AG04450 (cell line): ENCODE measurements at regions of chr1 and their contacts with region 1.

Region 1: DNA sequence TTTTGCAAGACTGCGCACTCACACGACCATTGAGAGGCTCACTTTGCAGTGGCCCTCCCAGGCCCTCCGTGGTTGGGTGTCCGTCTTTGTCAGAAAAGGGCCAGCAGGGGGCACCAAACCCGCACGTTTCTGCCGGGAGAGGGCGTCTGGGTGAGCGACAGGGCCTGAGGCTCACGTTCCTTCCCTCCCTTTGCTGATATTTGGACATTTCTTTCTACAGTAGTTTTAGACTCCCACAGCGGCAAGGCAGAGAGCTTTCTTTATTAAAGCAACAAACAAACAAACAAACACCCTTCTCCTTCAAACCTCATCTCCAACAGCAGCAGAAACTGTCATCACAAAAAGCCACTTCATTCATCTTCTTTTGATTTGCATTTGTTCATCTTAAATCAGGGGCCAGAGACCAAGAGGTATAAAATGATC is 79.2 kb upstream of the WDR26 start:
- DNase-seq: no peak
- H3K4me3 ChIP-seq: no peak overlapping the region
- H3K27ac ChIP-seq: no peak overlapping the region
- H3K27me3 ChIP-seq: no peaks in the 10 kb centered on the region
- CTCF ChIP-seq: peak; percentile 96

Region 2: GRCh38 chr1:224368409-224368808 is 145.4 kb before region 1 on chr1:
- CTCF ChIA-PET with region 1: no interaction called
- POLR2A ChIA-PET with region 1: no interaction called
- DNase-seq: no peak
- H3K4me3 ChIP-seq: no peak overlapping the region
- H3K27ac ChIP-seq: no peak overlapping the region
- H3K27me3 ChIP-seq: no peaks in the 10 kb centered on the region
- CTCF ChIP-seq: no peak

Region 3: DNA sequence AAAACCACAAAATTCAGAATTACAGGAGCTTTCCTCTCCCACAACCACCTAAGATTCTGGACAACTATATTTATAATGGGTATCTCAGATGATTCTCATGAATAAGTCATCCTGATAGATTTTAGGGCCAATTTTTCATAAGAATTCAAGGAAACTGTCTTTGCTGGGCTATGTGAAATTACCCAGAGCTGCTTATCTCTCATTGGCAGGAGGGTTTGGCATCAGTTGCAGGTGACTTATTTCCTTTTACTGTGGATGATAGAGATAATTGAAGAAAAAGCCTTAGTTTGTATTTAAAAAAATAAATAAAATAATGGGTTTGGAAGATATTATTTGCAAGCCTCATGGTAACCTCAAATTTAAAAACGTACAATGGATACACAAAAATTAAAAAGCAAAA is 41.0 kb before region 1 on chr1:
- CTCF ChIA-PET with region 1: no interaction called
- POLR2A ChIA-PET with region 1: no interaction called
- DNase-seq: no peak
- H3K4me3 ChIP-seq: no peak overlapping the region
- H3K27ac ChIP-seq: no peak overlapping the region
- H3K27me3 ChIP-seq: no peaks in the 10 kb centered on the region
- CTCF ChIP-seq: no peak

Region 4: GRCh38 chr1:224497714-224498573 is 15.9 kb before region 1 on chr1:
- CTCF ChIA-PET with region 1: interaction called, 26 read pairs
- POLR2A ChIA-PET with region 1: no interaction called
- DNase-seq: no peak
- H3K4me3 ChIP-seq: no peak overlapping the region
- H3K27ac ChIP-seq: peak overlapping the region; percentile 86
- H3K27me3 ChIP-seq: no peaks in the 10 kb centered on the region
- CTCF ChIP-seq: peak; percentile 13; the same call in 1 of the 2 replicates

Region 5: GRCh38 chr1:224542783-224543440 is 29.1 kb after region 1 on chr1:
- CTCF ChIA-PET with region 1: interaction called, 18 read pairs
- POLR2A ChIA-PET with region 1: no interaction called
- DNase-seq: peak; percentile 90
- H3K4me3 ChIP-seq: no peak overlapping the region
- H3K27ac ChIP-seq: peak overlapping the region; percentile 89
- H3K27me3 ChIP-seq: no peaks in the 10 kb centered on the region
- CTCF ChIP-seq: no peak

Region 6: DNA sequence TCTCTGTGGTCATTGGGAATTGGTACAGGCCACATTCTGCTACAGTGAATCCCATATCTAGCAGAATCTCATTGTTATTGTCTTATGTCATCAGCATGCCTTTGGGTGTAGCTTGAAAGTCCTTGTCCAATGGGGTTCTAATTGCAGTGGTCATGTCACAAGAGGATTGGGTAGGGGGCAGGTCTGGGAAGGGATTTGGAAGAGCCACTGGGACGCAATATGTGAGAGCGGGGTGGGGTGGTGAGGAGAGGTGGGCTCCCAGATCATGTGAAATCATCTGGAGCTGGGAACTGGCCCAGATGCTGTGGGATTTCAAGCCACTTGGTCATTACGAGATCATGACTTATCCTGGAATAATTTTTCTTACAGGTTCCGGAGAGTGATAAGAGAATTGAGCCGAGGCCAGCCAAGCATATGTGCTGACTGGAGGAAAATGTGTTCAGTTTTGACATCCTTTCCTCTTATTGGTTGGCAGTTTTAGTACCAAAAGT is 118.6 kb after region 1 on chr1:
- CTCF ChIA-PET with region 1: interaction called, 30 read pairs
- POLR2A ChIA-PET with region 1: no interaction called
- DNase-seq: peak; percentile 59
- H3K4me3 ChIP-seq: no peak overlapping the region
- H3K27ac ChIP-seq: peak overlapping the region; percentile 80
- H3K27me3 ChIP-seq: no peaks in the 10 kb centered on the region
- CTCF ChIP-seq: no peak

Region 7: DNA sequence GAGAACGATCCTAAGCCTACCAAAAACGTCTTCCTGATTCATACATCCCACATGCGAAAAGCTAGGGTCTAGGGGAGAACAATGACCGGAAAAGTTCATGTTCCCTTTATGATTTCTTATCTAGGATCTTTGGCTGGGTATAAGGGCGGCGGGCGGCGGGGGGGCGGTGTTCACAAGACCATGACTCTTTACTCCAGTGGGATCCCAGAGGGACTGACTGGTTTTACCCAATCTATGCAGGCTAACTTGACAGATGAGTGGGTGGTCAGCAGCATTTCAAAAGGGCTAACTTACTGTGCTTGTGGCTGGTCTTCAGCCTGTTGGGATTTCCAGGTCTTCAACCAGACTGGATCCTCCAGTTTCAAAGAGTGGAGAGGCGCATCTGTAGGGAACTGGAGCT is 142.6 kb after region 1 on chr1:
- CTCF ChIA-PET with region 1: interaction called, 17 read pairs
- POLR2A ChIA-PET with region 1: no interaction called
- DNase-seq: no peak
- H3K4me3 ChIP-seq: no peak overlapping the region
- H3K27ac ChIP-seq: no peak overlapping the region
- H3K27me3 ChIP-seq: no peaks in the 10 kb centered on the region
- CTCF ChIP-seq: no peak

Region 8: GRCh38 chr1:224851210-224851847 is 337.5 kb after region 1 on chr1:
- CTCF ChIA-PET with region 1: interaction called, 327 read pairs
- POLR2A ChIA-PET with region 1: no interaction called
- DNase-seq: no peak
- H3K4me3 ChIP-seq: no peak overlapping the region
- H3K27ac ChIP-seq: no peak overlapping the region
- H3K27me3 ChIP-seq: no peaks in the 10 kb centered on the region
- CTCF ChIP-seq: peak; percentile 82

Region 9: DNA sequence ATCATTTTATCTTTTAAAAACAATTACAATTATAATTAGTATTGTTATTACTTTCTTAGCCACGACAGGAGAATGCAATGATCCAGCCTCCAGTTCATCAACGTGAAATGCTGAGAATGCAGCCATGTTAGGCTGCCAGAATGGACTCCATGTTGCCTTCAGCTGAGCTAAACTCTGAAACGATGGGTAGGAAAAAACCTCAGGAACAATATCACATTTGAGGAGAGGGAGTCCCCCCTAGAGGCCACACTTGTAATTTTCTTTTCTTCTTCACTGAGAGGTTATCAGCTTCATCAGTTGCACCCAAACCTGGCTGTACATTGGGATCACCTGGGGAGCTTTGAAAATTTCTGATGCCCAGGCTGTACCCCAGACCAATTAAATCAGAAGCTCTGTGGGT is 381.1 kb after region 1 on chr1:
- CTCF ChIA-PET with region 1: interaction called, 123 read pairs
- POLR2A ChIA-PET with region 1: no interaction called
- DNase-seq: peak; percentile 10
- H3K4me3 ChIP-seq: no peak overlapping the region
- H3K27ac ChIP-seq: no peak overlapping the region
- H3K27me3 ChIP-seq: peaks cover 2% of the 10 kb centered on the region
- CTCF ChIP-seq: peak; percentile 57